GM10248 (cell line): ENCODE measurements at regions of chr15 and their contacts with region 1.

Region 1: GRCh38 chr15:38266247-38266986 is 13.8 kb downstream of the SPRED1 start:
- DNase-seq: no peak
- CTCF ChIP-seq: no peak

Region 2: DNA sequence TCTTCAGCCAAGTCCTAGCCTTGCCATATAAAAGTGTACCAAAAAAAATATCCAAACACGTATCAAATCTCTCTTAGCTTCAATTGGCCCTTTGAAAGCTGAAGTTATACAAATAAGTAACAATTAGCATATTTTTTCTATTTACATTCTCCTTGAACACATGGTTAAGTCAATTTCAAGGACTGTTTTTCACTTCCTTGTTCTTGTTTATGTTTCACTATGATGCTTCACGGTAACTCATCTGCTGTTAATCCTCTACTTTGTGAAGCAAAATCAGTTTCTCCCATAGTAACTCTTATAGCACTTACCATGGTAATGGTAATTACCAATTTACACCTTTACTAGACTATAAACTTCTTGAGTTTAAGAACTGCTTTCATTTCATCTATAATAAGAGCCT is 24.4 kb before region 1 on chr15:
- CTCF ChIA-PET with region 1: no interaction called
- POLR2A ChIA-PET with region 1: no interaction called
- DNase-seq: peak; percentile 32
- CTCF ChIP-seq: no peak

Region 3: DNA sequence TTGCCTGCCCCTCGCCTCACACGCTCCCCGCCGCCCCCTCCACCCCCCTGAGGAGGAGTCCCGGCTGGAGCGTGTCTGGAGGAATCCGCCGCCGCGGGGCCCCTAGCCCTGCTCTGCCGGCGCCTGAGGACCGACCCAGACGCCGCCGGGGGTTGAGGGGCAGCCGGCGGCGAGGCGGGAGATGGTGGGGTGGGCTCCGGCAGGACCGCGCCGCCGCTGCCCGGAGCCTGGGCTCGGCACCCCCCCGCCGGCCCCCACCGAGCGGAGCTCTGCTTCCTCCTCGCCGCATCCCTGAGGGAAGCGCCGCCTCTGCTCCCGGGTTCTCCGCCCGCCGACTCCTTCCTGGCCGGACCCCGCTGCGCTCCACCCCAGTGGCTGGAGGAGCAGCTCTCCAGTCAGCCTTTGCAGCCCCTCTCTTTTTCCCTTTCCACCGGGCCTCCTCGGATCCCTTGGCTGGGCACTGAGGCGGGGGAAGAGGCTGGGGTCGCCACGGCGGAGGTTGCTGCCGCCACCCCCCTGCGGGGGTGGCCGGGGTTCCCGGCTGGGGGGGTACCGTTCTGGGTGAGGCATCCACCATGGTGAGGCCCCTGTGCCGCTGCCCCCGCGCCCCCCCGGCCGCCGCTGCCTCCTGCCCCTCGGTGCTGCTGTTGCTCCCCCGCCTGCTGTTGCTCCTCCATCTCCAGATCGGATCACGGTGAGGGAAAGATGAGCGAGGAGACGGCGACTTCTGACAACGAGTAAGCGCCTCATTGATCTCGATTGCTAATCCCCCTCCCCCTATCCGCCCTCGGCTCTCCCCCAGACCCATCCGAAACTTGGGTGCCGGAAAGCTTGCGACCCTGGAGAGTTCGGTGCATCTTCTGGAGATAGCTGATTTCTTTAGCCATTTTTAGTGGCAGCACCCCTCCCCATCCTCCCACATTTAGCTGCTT is 13.7 kb before region 1 on chr15 and contains the start of gene SPRED1:
- CTCF ChIA-PET with region 1: interaction called, 12 read pairs
- POLR2A ChIA-PET with region 1: no interaction called
- DNase-seq: peak; percentile 35
- CTCF ChIP-seq: no peak